T-cell (primary cell): ENCODE measurements at regions of chr1 and their contacts with region 1.

Region 1: GRCh38 chr1:195198726-195199125 is 1409.5 kb downstream of the KCNT2 start:
- DNase-seq: no peak
- ATAC-seq: no peak
- H3K4me3 ChIP-seq: no peak overlapping the region
- H3K4me3 Mint-ChIP-seq: no peak overlapping the region
- H3K27ac ChIP-seq: no peak overlapping the region
- H3K27ac Mint-ChIP-seq: no peak overlapping the region
- H3K4me1 ChIP-seq: no peaks in the 10 kb centered on the region
- H3K4me1 Mint-ChIP-seq: peaks cover 6 to 17% (median 10%) of the 10 kb centered on the region in 3 donors
- H3K27me3 ChIP-seq: no peaks in the 10 kb centered on the region
- H3K27me3 Mint-ChIP-seq: no peaks in the 10 kb centered on the region

Region 2: GRCh38 chr1:195804547-195804946 is 605.8 kb after region 1 on chr1:
- CTCF ChIA-PET with region 1: interaction called in 1 of 2 experiments, 10 read pairs
- POLR2A ChIA-PET with region 1: no interaction called
- DNase-seq: no peak
- ATAC-seq: no peak
- H3K4me3 ChIP-seq: no peak overlapping the region
- H3K4me3 Mint-ChIP-seq: no peak overlapping the region
- H3K27ac ChIP-seq: no peak overlapping the region
- H3K27ac Mint-ChIP-seq: no peak overlapping the region
- H3K4me1 ChIP-seq: no peaks in the 10 kb centered on the region
- H3K4me1 Mint-ChIP-seq: no peaks in the 10 kb centered on the region
- H3K27me3 ChIP-seq: no peaks in the 10 kb centered on the region
- H3K27me3 Mint-ChIP-seq: no peaks in the 10 kb centered on the region

Region 3: GRCh38 chr1:196229546-196229945 is 1030.8 kb after region 1 on chr1:
- CTCF ChIA-PET with region 1: no interaction called
- POLR2A ChIA-PET with region 1: no interaction called
- DNase-seq: no peak
- ATAC-seq: no peak
- H3K4me3 ChIP-seq: no peak overlapping the region
- H3K4me3 Mint-ChIP-seq: no peak overlapping the region
- H3K27ac ChIP-seq: no peak overlapping the region
- H3K27ac Mint-ChIP-seq: no peak overlapping the region
- H3K4me1 ChIP-seq: no peaks in the 10 kb centered on the region
- H3K4me1 Mint-ChIP-seq: no peaks in the 10 kb centered on the region
- H3K27me3 ChIP-seq: no peaks in the 10 kb centered on the region
- H3K27me3 Mint-ChIP-seq: no peaks in the 10 kb centered on the region